B cell (primary cell): ENCODE measurements at regions of chr4 and their contacts with region 1.

Region 1: DNA sequence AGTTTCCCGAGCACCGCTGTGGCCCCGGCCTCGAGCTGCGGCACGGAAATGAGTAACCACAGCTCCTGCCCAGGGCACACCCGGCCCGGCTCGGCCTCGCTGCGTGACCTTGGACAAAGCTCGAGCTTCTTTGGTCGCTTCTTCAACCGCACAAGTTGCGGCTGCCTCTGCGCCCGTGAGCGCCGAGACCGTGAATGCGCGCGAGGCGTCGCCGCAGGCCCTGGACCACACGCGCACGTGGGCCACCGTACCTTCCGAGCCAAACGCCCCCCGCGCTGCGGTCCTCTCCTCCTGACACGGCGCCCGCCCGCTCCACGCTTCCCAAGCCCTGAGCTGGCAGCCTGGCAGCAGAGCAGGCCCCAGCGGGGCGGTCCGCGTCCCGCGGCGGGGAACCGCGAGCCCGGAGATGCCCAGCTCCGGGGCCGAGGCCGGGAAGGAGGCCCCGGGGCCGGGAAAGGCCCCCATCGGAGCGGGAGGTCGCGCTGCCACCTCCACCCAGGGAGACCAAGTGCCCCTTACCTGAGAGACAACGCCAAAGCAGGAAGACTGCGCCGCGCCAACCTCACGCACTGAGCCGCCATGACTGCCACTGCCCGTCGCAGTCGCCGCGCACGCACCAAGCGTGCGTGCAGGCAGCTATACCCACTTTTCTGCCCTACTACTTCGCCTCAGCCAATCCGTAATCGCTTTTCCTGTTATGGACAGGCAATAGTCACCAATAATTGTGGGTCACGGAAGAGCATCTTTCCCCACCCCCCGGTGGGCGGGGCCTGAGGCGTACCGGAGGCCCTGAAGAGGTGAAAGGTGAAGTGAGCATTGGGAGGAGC is at the start of gene GRPEL1:
- DNase-seq: peak; percentile 100
- ATAC-seq: peak; percentile 91
- H3K4me3 ChIP-seq: peak within 1 kb of the TSS; percentile 73 to 90 (median 80)
- H3K4me3 Mint-ChIP-seq: peak within 1 kb of the TSS; percentile 94
- H3K27ac ChIP-seq: peak within 1 kb of the TSS; percentile 73 to 75
- H3K27ac Mint-ChIP-seq: peak within 1 kb of the TSS; percentile 94
- H3K4me1 ChIP-seq: peaks cover 26 to 37% of the 10 kb centered on the region in 2 donors
- H3K4me1 Mint-ChIP-seq: peaks cover 44% of the 10 kb centered on the region
- H3K27me3 ChIP-seq: peaks cover 0 to 3% (median 1%) of the 10 kb centered on the region in 4 experiments
- H3K27me3 Mint-ChIP-seq: peaks cover 3% of the 10 kb centered on the region
- CTCF ChIP-seq: no peak
- total RNA-seq, gene GRPEL1: 19.6 and 26.0 TPM in 2 replicates

Region 2: DNA sequence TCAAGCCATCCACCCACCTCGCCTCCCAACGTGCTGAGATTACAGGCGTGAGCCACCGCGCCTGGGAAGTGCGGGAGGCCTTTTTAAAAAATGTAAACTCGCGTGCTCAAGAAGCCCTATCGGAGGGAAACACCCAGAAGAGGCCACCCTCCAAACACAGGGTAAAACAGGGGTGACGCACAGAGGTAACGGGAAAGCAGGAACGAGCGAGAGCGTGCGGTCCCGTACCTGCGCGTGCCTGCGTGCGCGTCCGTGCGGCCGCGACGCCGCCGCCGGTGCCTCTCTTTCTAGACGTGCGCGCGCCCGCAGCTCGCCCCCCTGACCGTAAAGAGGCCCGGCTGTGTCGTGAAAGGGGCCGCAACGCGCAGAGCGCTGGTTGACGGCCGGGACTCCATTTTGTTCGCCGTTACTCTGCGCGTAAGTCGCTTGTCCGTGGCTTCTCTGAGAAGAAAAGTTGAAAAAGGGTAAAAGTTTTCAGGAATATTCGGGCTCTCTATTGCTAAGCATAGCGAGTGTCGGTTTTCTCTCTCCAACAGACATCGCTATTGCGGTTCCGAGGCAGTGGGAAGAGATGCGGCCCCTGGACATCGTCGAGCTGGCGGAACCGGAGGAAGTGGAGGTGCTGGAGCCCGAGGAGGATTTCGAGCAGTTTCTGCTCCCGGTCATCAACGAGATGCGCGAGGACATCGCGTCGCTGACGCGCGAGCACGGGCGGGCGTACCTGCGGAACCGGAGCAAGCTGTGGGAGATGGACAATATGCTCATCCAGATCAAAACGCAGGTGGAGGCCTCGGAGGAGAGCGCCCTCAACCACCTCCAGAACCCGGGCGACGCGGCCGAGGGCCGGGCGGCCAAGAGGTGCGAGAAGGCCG is 427.1 kb before region 1 on chr4 and contains the start of gene MRFAP1:
- CTCF ChIA-PET with region 1: interaction called, 7 read pairs
- POLR2A ChIA-PET with region 1: interaction called, 11 read pairs
- intact Hi-C with region 1: loop called (anchors 1 kb)
- DNase-seq: peak; percentile 97
- ATAC-seq: peak; percentile 87
- H3K4me3 ChIP-seq: peak within 1 kb of the TSS; percentile 83 to 99 (median 96)
- H3K4me3 Mint-ChIP-seq: peak within 1 kb of the TSS; percentile 99
- H3K27ac ChIP-seq: peak within 1 kb of the TSS; percentile 95 to 96
- H3K27ac Mint-ChIP-seq: peak within 1 kb of the TSS; percentile 98
- H3K4me1 ChIP-seq: peaks cover 17 to 25% of the 10 kb centered on the region in 2 donors
- H3K4me1 Mint-ChIP-seq: peaks cover 33% of the 10 kb centered on the region
- H3K27me3 ChIP-seq: no peaks in the 10 kb centered on the region
- H3K27me3 Mint-ChIP-seq: no peaks in the 10 kb centered on the region
- CTCF ChIP-seq: no peak
- total RNA-seq, gene MRFAP1: 100 and 113 TPM in 2 replicates

Region 3: GRCh38 chr4:6716018-6716911 is 351.4 kb before region 1 on chr4 and contains the start of gene BLOC1S4:
- CTCF ChIA-PET with region 1: interaction called, 148 read pairs
- POLR2A ChIA-PET with region 1: interaction called, 7 read pairs
- intact Hi-C with region 1: loop called (anchors 1 kb)
- DNase-seq: peak; percentile 97
- ATAC-seq: peak; percentile 83
- H3K4me3 ChIP-seq: peak within 1 kb of the TSS; percentile 67 to 82 (median 80)
- H3K4me3 Mint-ChIP-seq: peak within 1 kb of the TSS; percentile 99
- H3K27ac ChIP-seq: peak within 1 kb of the TSS; percentile 76 to 85
- H3K27ac Mint-ChIP-seq: peak within 1 kb of the TSS; percentile 100
- H3K4me1 ChIP-seq: peaks cover 21 to 33% of the 10 kb centered on the region in 2 donors
- H3K4me1 Mint-ChIP-seq: peaks cover 38% of the 10 kb centered on the region
- H3K27me3 ChIP-seq: no peaks in the 10 kb centered on the region
- H3K27me3 Mint-ChIP-seq: no peaks in the 10 kb centered on the region
- CTCF ChIP-seq: no peak
- total RNA-seq, gene BLOC1S4: 25.3 and 26.3 TPM in 2 replicates

Region 4: DNA sequence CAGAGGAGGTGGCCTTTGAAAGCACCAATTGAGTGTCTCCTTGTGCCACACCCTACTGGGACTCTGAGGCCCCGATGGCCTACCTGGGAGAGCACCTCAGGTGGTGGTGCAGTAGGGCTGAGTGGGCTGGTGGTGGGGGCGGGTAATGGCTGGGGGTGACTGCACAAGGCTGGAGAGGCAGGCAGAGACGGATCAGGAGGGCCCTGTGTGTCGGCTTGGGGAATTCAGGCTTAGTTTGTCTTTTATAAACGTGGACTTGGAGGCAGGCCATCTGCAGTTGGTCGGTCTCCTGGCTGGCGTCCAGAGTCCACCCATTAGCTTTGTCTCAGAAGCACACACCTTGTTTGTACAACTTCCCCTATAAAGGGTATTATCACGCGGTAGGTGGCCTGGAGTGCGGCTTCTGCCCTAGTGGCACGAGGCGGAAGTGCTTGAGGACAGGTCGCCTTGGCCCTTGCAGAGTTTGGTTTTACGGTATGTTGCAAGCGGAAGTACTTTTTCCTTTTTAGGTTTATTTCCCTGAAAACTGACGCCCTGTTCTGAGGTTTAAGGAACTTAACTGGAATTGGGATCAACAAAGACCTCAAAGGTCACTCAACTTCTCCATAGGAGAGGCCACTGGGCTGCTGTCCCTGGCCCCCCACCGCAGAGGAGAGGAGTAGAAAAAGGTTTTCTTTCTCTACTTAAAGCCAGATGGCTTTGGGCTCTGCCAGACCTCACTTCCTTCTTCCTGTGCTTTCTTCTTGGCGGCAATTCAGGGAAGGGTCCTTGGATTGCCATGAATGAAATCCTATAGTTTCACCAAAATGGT is 150.0 kb before region 1 on chr4:
- CTCF ChIA-PET with region 1: interaction called, 5 read pairs
- POLR2A ChIA-PET with region 1: no interaction called
- intact Hi-C with region 1: loop called (anchors 1 kb)
- DNase-seq: peak; percentile 80
- ATAC-seq: peak; percentile 90
- H3K4me3 ChIP-seq: peak overlapping the region in 2 of 5 experiments; percentile 3 to 34
- H3K4me3 Mint-ChIP-seq: peak overlapping the region; percentile 72
- H3K27ac ChIP-seq: peak overlapping the region; percentile 44 to 55
- H3K27ac Mint-ChIP-seq: peak overlapping the region; percentile 88
- H3K4me1 ChIP-seq: peaks cover 33 to 37% of the 10 kb centered on the region in 2 donors
- H3K4me1 Mint-ChIP-seq: peaks cover 39% of the 10 kb centered on the region
- H3K27me3 ChIP-seq: no peaks in the 10 kb centered on the region
- H3K27me3 Mint-ChIP-seq: no peaks in the 10 kb centered on the region
- CTCF ChIP-seq: peak; percentile 77

Region 5: GRCh38 chr4:7015383-7016035 is 52.2 kb before region 1 on chr4:
- CTCF ChIA-PET with region 1: interaction called, 7 read pairs
- POLR2A ChIA-PET with region 1: no interaction called
- intact Hi-C with region 1: loop called (anchors 1 kb)
- DNase-seq: no peak
- ATAC-seq: no peak
- H3K4me3 ChIP-seq: no peak overlapping the region
- H3K4me3 Mint-ChIP-seq: no peak overlapping the region
- H3K27ac ChIP-seq: no peak overlapping the region
- H3K27ac Mint-ChIP-seq: peak overlapping the region; percentile 56
- H3K4me1 ChIP-seq: peaks cover 13 to 18% of the 10 kb centered on the region in 2 donors
- H3K4me1 Mint-ChIP-seq: peaks cover 23% of the 10 kb centered on the region
- H3K27me3 ChIP-seq: no peaks in the 10 kb centered on the region
- H3K27me3 Mint-ChIP-seq: no peaks in the 10 kb centered on the region
- CTCF ChIP-seq: no peak

Region 6: GRCh38 chr4:7101692-7102515 is 34.2 kb after region 1 on chr4:
- CTCF ChIA-PET with region 1: interaction called, 15 read pairs
- POLR2A ChIA-PET with region 1: interaction called, 3 read pairs
- intact Hi-C with region 1: loop called (anchors 1 kb)
- DNase-seq: peak; percentile 66
- ATAC-seq: peak; percentile 51
- H3K4me3 ChIP-seq: peak overlapping the region in 4 of 5 experiments; percentile 15 to 84 (median 72)
- H3K4me3 Mint-ChIP-seq: peak overlapping the region; percentile 91
- H3K27ac ChIP-seq: no peak overlapping the region
- H3K27ac Mint-ChIP-seq: peak overlapping the region; percentile 61
- H3K4me1 ChIP-seq: peaks cover 21 to 25% of the 10 kb centered on the region in 2 donors
- H3K4me1 Mint-ChIP-seq: peaks cover 19% of the 10 kb centered on the region
- H3K27me3 ChIP-seq: peaks cover 0 to 9% (median under 1%) of the 10 kb centered on the region in 4 experiments
- H3K27me3 Mint-ChIP-seq: peaks cover 12% of the 10 kb centered on the region
- CTCF ChIP-seq: peak; percentile 74

Region 7: GRCh38 chr4:8015512-8015911 is 947.8 kb after region 1 on chr4:
- CTCF ChIA-PET with region 1: no interaction called
- POLR2A ChIA-PET with region 1: no interaction called
- intact Hi-C with region 1: no loop called
- DNase-seq: no peak
- ATAC-seq: no peak
- H3K4me3 ChIP-seq: no peak overlapping the region
- H3K4me3 Mint-ChIP-seq: no peak overlapping the region
- H3K27ac ChIP-seq: no peak overlapping the region
- H3K27ac Mint-ChIP-seq: no peak overlapping the region
- H3K4me1 ChIP-seq: no peaks in the 10 kb centered on the region
- H3K4me1 Mint-ChIP-seq: no peaks in the 10 kb centered on the region
- H3K27me3 ChIP-seq: no peaks in the 10 kb centered on the region
- H3K27me3 Mint-ChIP-seq: peaks cover 12% of the 10 kb centered on the region
- CTCF ChIP-seq: no peak